PC-3 (cell line): ENCODE measurements at regions of chr11 and their contacts with region 1.

Region 1: GRCh38 chr11:69683764-69684333 is 8.7 kb upstream of the LTO1 start:
- DNase-seq: peak; percentile 76
- ATAC-seq: peak; percentile 61
- H3K4me3 ChIP-seq: no peak overlapping the region
- H3K27ac ChIP-seq: no peak overlapping the region
- H3K4me1 ChIP-seq: peaks cover 22% of the 10 kb centered on the region
- H3K27me3 ChIP-seq: no peaks in the 10 kb centered on the region
- CTCF ChIP-seq: peak; percentile 87

Region 2: DNA sequence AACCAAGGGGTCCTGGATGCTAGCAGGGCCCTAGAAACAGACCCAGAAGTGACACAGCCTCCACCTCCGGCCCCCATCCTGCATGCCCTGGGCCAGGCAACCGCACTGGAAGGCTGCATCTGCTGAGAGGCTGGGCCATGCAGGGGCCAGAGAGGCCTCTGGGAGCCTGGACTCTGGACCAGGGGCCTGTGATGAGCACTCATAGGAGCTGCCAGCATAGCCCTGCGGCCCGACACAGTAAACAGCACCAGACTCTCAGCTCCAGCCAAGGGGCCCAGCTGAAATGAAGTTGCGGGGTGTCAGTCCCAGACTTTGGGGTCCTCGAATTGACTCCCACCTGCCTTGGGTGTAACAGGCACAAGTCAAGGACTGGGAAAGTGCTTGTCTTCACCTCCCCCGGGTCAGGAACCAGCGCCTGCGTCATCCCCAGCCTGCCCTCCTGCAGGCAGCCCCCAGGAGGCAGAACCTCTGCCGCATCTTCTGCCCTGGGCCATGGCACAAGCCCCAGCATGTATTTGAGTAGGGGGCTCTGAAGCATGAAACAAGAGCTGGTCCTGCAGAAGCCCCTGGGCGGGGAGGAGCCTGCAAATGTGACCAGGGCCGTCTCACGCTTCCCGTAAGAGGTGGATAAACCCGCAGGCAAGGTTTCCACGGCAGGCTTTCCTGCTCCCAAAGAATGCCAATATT is 68.1 kb before region 1 on chr11:
- CTCF ChIA-PET with region 1: no interaction called
- POLR2A ChIA-PET with region 1: no interaction called
- intact Hi-C with region 1: no loop called
- DNase-seq: no peak
- ATAC-seq: no peak
- H3K4me3 ChIP-seq: no peak overlapping the region
- H3K27ac ChIP-seq: no peak overlapping the region
- H3K4me1 ChIP-seq: no peaks in the 10 kb centered on the region
- H3K27me3 ChIP-seq: no peaks in the 10 kb centered on the region
- CTCF ChIP-seq: no peak

Region 3: DNA sequence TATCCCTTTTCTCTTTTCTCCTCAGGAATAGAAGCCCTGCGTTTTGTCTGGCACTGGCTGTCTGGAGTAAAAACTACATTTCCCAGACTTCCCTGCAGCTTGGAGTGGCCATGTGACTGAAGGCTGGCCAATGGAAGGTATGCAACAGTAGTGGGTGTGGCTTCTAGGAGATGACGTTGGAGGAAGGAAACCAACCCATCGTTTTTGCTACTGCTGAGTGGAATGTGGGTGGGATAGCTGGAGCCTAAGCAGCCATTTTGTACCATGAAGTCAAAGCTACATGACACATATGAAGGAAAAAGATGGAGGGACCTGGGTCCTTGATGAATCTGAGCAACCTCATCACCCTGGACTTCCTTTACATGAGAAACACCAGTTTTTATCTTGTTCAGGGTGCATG is 115.7 kb after region 1 on chr11:
- CTCF ChIA-PET with region 1: interaction called, 3 read pairs
- POLR2A ChIA-PET with region 1: no interaction called
- intact Hi-C with region 1: loop called (anchors 5 kb)
- DNase-seq: peak; percentile 70
- ATAC-seq: peak; percentile 68
- H3K4me3 ChIP-seq: no peak overlapping the region
- H3K27ac ChIP-seq: no peak overlapping the region
- H3K4me1 ChIP-seq: no peaks in the 10 kb centered on the region
- H3K27me3 ChIP-seq: no peaks in the 10 kb centered on the region
- CTCF ChIP-seq: no peak

Region 4: GRCh38 chr11:69888483-69889076 is 204.7 kb after region 1 on chr11:
- CTCF ChIA-PET with region 1: no interaction called
- POLR2A ChIA-PET with region 1: no interaction called
- intact Hi-C with region 1: loop called (anchors 2 kb)
- DNase-seq: peak; percentile 93
- ATAC-seq: peak; percentile 85
- H3K4me3 ChIP-seq: no peak overlapping the region
- H3K27ac ChIP-seq: no peak overlapping the region
- H3K4me1 ChIP-seq: peaks cover 5% of the 10 kb centered on the region; the same call in 1 of the 2 replicates
- H3K27me3 ChIP-seq: no peaks in the 10 kb centered on the region
- CTCF ChIP-seq: peak; percentile 97

Region 5: GRCh38 chr11:70191495-70192140 is 507.8 kb after region 1 on chr11:
- CTCF ChIA-PET with region 1: no interaction called
- POLR2A ChIA-PET with region 1: no interaction called
- intact Hi-C with region 1: loop called (anchors 1 kb)
- DNase-seq: peak; percentile 84
- ATAC-seq: peak; percentile 80
- H3K4me3 ChIP-seq: no peak overlapping the region
- H3K27ac ChIP-seq: no peak overlapping the region
- H3K4me1 ChIP-seq: peaks cover 8% of the 10 kb centered on the region; the same call in 1 of the 2 replicates
- H3K27me3 ChIP-seq: no peaks in the 10 kb centered on the region
- CTCF ChIP-seq: peak; percentile 98